PC-9 (cell line): ENCODE measurements at regions of chr9 and their contacts with region 1.

Region 1: GRCh38 chr9:76086539-76086938 is 196.1 kb downstream of the PCSK5 start:
- DNase-seq: no peak
- H3K4me3 ChIP-seq: no peak overlapping the region
- H3K27ac ChIP-seq: no peak overlapping the region
- H3K4me1 ChIP-seq: no peaks in the 10 kb centered on the region
- H3K27me3 ChIP-seq: no peaks in the 10 kb centered on the region
- CTCF ChIP-seq: no peak

Region 2: GRCh38 chr9:75814667-75815066 is 271.9 kb before region 1 on chr9:
- CTCF ChIA-PET with region 1: no interaction called
- POLR2A ChIA-PET with region 1: no interaction called
- intact Hi-C with region 1: no loop called
- DNase-seq: peak in 1 of 2 experiments; percentile 46
- H3K4me3 ChIP-seq: no peak overlapping the region
- H3K27ac ChIP-seq: no peak overlapping the region
- H3K4me1 ChIP-seq: no peaks in the 10 kb centered on the region
- H3K27me3 ChIP-seq: no peaks in the 10 kb centered on the region
- CTCF ChIP-seq: no peak

Region 3: DNA sequence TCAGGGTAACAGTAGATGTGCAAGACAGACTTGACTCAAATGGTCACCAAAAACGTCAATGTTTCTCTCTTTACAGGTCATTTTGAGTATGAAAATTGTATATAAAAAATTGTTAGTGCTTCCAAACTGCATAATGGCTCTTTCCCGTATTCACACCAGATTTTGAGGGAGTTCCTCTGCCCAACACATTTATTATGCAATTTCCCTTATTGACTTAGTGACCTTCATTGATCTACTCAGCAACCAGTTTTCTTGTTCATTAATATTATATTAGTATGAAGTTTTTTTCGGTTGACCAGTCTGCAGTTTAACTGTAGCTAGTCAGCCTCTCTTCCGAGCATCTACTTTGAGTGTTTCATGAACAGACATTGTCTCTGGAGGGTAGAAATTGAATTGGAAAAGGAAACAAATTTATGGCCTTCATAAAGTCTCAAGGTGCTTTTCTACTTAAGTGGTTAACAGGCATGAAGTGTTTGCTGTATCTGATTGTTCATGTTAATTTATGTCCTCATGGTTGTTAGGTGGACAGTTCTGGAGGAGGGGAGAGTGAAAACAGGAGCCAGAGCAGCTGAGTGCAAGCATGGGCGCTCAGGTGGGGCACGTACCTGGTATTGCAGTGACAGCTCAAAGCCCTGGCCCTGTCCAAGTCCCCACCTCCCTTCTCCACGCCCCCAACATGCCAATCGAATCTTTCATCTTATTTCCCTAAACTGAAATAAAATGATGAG is 67.5 kb after region 1 on chr9:
- CTCF ChIA-PET with region 1: no interaction called
- POLR2A ChIA-PET with region 1: no interaction called
- intact Hi-C with region 1: loop called (anchors 10 kb)
- DNase-seq: no peak
- H3K4me3 ChIP-seq: no peak overlapping the region
- H3K27ac ChIP-seq: no peak overlapping the region
- H3K4me1 ChIP-seq: no peaks in the 10 kb centered on the region
- H3K27me3 ChIP-seq: no peaks in the 10 kb centered on the region
- CTCF ChIP-seq: no peak